Activated CD4-positive, alpha-beta T cell treated with anti-CD3 and anti-CD28 coated beads, Interleukin-2, amount 10 ng/mL, durations not matched to agents 7 days and 5 days (primary cell): ENCODE measurements at regions of chr10 and their contacts with region 1.

Region 1: GRCh38 chr10:101782811-101783735 is at the start of gene NPM3:
- DNase-seq: peak; percentile 89
- H3K4me3 Mint-ChIP-seq: peak within 1 kb of the TSS; percentile 100
- H3K27ac Mint-ChIP-seq: peak within 1 kb of the TSS; percentile 97
- H3K4me1 Mint-ChIP-seq: peaks cover 59% of the 10 kb centered on the region
- H3K27me3 Mint-ChIP-seq: peaks cover 12% of the 10 kb centered on the region
- total RNA-seq, gene NPM3: 25.9 to 30.3 TPM

Region 2: DNA sequence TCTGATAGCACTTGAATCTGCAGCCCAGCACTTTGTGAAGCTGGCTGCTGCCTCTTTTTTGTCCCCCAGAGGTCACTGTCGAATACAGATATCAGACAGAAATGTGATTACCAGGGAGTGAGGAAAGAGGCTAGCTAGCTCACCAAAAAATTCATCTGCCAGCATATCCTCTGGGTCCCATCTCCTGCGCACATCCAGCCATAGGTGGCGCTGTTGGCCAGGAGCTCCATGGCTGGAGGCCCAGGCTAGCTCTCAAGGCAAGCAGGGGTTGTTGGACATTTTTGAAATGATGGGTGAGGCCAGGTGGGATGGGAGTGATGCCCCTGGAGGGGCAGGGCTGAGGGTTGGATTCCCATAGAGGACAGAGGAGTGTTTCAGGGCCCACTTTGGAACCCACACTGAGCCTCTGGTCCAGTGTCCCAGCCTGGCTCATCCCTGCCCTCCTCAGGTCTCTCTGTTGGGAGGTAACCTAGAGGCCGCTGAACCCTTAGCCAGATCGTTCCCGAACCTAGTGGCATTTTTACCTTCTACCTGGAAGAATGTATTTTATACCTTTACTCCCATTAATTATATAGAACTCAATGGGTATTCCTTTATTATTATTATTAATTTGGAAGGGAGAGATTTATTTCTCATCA is 180.2 kb before region 1 on chr10:
- CTCF ChIA-PET with region 1: interaction called, 30 read pairs
- POLR2A ChIA-PET with region 1: no interaction called
- DNase-seq: peak; percentile 78
- H3K4me3 Mint-ChIP-seq: no peak overlapping the region
- H3K27ac Mint-ChIP-seq: no peak overlapping the region
- H3K4me1 Mint-ChIP-seq: no peaks in the 10 kb centered on the region
- H3K27me3 Mint-ChIP-seq: no peaks in the 10 kb centered on the region

Region 3: DNA sequence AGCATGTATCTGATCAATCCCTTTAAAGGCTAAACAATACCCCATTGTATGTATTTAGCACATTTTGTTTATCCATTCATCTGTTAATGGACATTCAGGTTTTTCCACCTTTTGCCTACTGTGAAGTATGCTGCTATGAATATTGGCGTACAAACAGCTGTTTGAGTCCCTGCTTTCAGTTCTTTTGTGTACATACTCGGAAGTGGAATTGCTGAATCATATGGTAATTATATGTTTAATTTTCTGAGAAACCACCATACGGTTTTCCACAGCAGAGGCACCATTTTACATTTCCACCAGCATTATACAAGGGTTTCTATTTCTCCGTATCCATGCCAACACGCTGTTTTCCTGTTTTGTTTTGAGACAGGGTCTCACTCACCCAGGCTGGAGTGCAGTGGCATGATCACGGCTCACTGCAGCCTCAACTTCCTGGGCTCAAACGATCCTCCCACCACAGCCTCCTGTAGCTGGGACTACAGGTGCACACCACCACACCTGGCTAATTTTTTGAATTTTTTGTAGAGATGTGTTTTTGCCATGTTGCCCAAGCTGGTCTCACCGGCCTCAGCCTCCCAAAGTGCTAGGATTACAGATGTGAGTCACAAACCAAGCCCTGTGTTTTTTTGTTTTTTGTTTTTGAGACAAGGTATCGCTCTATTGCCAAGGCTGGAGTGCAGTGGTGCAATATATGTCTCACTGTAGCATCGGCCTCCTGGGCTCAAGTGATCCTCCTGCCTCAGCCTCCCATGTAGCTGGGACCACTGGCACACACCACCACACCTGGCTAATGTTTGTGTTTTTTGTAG is 66.0 kb before region 1 on chr10:
- CTCF ChIA-PET with region 1: no interaction called
- POLR2A ChIA-PET with region 1: no interaction called
- DNase-seq: no peak
- H3K4me3 Mint-ChIP-seq: no peak overlapping the region
- H3K27ac Mint-ChIP-seq: peak overlapping the region; percentile 75
- H3K4me1 Mint-ChIP-seq: no peaks in the 10 kb centered on the region
- H3K27me3 Mint-ChIP-seq: peaks cover 12% of the 10 kb centered on the region

Region 4: DNA sequence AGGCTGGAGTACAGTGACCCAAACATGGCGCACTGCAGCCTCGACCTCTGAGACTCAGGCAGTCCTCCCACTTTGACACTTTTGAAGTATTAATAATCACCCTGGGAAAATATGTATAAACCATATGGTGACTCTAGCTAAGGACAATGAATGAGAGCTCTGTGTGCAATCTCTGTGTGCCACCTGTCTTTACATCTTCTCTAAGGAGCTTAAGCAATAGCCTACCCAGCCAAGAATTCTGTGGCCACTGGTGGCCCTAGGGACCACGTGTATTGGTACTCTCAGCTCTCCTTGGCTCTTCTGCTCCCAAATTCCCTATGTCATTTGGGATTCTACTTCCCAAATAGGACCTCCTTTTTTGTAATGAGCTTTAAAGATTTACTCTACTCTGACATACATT is 30.8 kb before region 1 on chr10:
- CTCF ChIA-PET with region 1: no interaction called
- POLR2A ChIA-PET with region 1: no interaction called
- DNase-seq: no peak
- H3K4me3 Mint-ChIP-seq: no peak overlapping the region
- H3K27ac Mint-ChIP-seq: no peak overlapping the region
- H3K4me1 Mint-ChIP-seq: no peaks in the 10 kb centered on the region
- H3K27me3 Mint-ChIP-seq: peaks cover 15% of the 10 kb centered on the region

Region 5: GRCh38 chr10:101769541-101770180 is 13.4 kb before region 1 on chr10:
- CTCF ChIA-PET with region 1: interaction called, 13 read pairs
- POLR2A ChIA-PET with region 1: no interaction called
- DNase-seq: no peak
- H3K4me3 Mint-ChIP-seq: no peak overlapping the region
- H3K27ac Mint-ChIP-seq: no peak overlapping the region
- H3K4me1 Mint-ChIP-seq: peaks cover 7% of the 10 kb centered on the region
- H3K27me3 Mint-ChIP-seq: peaks cover 60% of the 10 kb centered on the region

Region 6: DNA sequence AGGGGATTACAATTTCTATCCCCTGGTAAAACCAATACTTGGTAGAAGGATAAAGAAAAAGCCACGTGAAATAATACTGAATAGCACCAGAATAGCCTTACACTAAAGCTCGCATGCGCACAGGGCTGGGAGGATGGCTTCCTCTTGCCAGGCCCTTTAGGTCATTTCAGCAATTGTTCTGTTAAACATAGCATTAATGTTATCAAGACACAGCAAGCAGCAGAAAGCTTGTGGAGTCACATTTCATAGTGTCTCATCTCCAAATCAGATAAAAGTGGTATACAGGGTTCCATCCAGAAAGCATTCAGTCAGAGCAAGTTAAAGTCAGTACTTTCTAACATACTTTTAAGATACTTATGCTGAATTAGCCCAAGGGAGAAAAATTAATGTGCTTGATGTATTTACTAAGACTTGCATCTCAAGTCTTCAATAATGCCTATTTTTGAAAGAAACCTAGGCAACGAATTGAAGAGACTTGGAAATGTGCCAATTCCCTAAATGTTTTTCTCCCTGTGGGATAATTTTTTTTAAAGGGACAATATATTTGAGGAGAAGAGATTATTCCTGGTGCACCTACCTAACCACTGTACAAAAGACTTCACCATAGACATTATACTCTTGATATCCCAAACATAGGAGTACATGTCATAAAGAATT is 14.5 kb after region 1 on chr10:
- CTCF ChIA-PET with region 1: interaction called, 11 read pairs
- POLR2A ChIA-PET with region 1: no interaction called
- DNase-seq: no peak
- H3K4me3 Mint-ChIP-seq: no peak overlapping the region
- H3K27ac Mint-ChIP-seq: no peak overlapping the region
- H3K4me1 Mint-ChIP-seq: peaks cover 5% of the 10 kb centered on the region
- H3K27me3 Mint-ChIP-seq: no peaks in the 10 kb centered on the region

Region 7: DNA sequence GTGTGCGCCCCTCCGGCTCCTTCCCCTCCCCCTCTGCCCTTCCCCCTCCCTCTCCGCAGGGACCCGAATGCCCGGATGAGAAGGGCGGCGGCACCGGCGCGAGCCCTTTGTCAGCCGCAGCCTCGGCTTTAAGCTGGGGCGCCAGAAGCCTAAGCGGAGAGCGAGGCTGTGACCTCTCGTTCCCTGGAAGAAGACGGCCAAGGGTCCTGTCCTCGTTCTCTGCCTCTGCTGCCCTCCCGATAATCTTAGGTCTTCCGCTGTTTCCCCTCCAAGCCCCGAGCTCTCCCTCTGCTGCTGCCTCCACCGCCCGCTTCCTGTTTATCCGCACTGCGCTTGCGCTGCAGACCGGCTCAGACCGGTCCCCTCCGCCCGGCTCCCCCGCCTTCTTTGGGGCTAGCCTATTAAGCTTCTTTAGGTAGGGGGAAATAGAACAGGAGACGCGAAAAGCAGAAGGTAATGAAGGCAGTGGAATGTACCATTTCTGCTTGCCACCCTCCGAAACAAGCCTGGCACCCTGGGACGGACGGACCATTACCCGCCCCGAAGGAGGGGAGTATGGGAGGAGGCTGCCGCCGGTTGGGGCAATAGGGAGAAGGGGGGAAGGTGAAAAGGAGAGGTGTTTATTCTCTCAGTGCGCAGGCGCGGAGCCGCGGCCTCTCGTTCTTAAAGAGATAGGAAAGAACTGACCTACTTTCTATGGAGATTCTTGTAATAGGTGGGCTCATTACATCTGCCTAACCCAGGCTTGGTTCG is 35.2 kb after region 1 on chr10 and contains the start of gene OGA:
- CTCF ChIA-PET with region 1: interaction called, 16 read pairs
- POLR2A ChIA-PET with region 1: no interaction called
- DNase-seq: peak; percentile 99
- H3K4me3 Mint-ChIP-seq: peak within 1 kb of the TSS; percentile 100
- H3K27ac Mint-ChIP-seq: peak within 1 kb of the TSS; percentile 100
- H3K4me1 Mint-ChIP-seq: peaks cover 41% of the 10 kb centered on the region
- H3K27me3 Mint-ChIP-seq: no peaks in the 10 kb centered on the region
- total RNA-seq, gene OGA: 135 to 145 TPM